Cardiac septum (tissue), 1 donor: ENCODE measurements at regions of chr16 and their contacts with region 1.

Region 1: DNA sequence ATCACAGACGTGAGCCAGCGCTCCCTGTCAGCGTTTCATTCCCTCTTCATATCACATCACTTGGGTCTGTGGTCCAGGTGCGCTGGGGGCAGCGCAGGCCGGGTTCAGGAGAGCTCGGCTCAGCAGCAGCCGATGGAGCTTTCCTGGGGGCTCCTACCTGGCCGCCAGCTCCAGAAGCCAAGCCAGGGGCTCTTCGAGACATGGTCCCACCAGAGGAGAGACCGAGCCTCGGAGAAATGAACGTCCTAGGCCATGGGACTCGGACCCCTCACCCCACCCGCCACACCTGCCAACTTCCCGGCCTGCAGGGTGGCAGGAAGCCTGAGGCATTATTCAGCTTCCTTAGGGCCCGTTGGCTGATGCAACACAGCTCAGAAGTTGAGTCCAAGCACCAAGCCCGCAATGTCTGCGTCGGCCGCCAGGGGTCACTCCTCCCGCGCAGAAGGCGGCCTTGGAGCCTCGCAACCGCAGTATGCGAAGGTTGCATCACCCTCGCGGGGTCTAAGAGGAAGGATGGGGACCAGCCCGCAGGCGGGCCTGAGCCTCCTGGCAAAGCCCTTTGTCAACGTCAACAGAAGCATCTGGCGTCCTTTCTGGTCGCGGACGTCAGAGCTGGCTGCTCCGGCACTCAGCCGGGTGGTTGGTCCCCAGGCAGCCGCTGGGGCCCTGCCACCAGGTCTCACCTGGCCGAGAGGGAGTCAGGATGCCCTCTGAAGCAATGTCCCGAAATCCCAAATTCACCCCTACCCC is 13.2 kb upstream of the KLHDC4 start:
- DNase-seq: peak; percentile 96

Region 2: GRCh38 chr16:87620201-87620495 is 158.9 kb before region 1 on chr16:
- intact Hi-C with region 1: no loop called
- DNase-seq: no peak

Region 3: GRCh38 chr16:87853411-87854052 is 74.5 kb after region 1 on chr16:
- intact Hi-C with region 1: loop called (anchors 5 kb)
- DNase-seq: peak; percentile 98